MCF 10A (cell line): ENCODE measurements at regions of chr16 and their contacts with region 1.

Region 1: DNA sequence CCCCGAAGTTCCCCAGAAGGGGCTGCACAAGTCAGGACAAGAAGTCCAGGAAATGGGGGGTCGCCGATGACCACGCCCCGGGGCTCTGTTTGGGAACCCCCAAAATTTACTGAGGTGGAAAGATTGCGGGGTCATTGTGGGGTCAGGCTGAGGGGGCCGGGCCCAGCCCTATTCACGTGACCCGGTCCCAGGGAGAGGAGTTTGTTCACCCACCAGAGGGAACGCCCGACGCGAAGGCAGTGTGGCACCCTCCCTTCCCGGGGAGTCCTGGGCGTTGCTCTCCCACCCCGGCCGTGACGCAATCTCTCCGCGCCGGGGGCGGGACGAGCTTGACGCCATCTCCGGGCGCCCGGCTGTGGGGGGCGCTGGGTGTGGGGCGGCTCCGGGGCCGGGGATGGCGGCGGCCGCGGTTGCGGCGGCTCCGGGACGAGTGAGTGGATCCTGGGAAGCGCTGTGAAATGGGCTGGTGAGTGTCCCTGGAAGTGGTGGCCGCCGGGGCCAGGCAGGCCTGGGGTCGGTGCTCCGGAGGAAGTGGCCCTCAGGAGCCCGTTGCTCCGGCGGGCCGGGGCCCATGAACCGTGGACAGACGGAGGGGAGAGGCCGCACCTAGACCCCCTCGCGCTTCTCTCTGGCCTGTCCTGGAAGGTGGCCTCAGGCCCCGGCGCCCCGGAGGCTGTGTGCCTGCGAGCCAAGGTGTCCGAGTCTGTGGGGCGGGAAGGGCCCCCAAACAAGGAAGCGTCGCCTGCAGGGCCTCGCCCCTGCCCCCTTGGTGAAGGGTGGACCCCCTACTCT is at the start of gene ATXN1L:
- DNase-seq: peak; percentile 93
- H3K4me3 Mint-ChIP-seq: peak within 1 kb of the TSS; percentile 90
- H3K27ac Mint-ChIP-seq: peak within 1 kb of the TSS; percentile 98
- H3K4me1 Mint-ChIP-seq: peaks cover 22% of the 10 kb centered on the region
- H3K27me3 Mint-ChIP-seq: no peaks in the 10 kb centered on the region
- CTCF ChIP-seq: no peak
- total RNA-seq, gene ATXN1L: 18.2 and 20.4 TPM in 2 replicates

Region 2: DNA sequence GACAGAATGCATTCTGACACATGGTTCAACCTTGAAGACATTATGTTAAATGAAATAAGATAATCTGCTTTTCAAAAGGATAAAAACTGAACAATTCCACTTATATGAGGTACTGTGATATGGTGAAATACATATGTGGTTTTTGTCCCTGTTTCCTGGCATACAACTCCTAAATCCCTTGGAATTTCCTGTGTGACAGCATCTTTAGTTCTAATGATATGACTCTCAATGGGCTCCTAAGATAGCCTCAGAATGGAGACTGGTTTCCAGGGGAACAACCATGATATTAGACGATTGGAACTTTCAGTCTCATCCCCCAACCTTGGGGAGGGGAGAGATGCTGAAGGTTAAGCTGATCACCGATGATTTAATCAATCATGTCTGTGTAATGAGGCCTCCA is 83.6 kb before region 1 on chr16:
- CTCF ChIA-PET with region 1: no interaction called
- POLR2A ChIA-PET with region 1: no interaction called
- intact Hi-C with region 1: loop called (anchors 10 kb)
- DNase-seq: no peak
- H3K4me3 Mint-ChIP-seq: no peak overlapping the region
- H3K27ac Mint-ChIP-seq: no peak overlapping the region
- H3K4me1 Mint-ChIP-seq: no peaks in the 10 kb centered on the region
- H3K27me3 Mint-ChIP-seq: no peaks in the 10 kb centered on the region
- CTCF ChIP-seq: no peak

Region 3: GRCh38 chr16:71855937-71856662 is 10.3 kb after region 1 on chr16:
- CTCF ChIA-PET with region 1: interaction called, 3 read pairs
- POLR2A ChIA-PET with region 1: interaction called, 11 read pairs
- intact Hi-C with region 1: no loop called
- DNase-seq: no peak
- H3K4me3 Mint-ChIP-seq: no peak overlapping the region
- H3K27ac Mint-ChIP-seq: no peak overlapping the region
- H3K4me1 Mint-ChIP-seq: no peaks in the 10 kb centered on the region
- H3K27me3 Mint-ChIP-seq: no peaks in the 10 kb centered on the region
- CTCF ChIP-seq: no peak

Region 4: DNA sequence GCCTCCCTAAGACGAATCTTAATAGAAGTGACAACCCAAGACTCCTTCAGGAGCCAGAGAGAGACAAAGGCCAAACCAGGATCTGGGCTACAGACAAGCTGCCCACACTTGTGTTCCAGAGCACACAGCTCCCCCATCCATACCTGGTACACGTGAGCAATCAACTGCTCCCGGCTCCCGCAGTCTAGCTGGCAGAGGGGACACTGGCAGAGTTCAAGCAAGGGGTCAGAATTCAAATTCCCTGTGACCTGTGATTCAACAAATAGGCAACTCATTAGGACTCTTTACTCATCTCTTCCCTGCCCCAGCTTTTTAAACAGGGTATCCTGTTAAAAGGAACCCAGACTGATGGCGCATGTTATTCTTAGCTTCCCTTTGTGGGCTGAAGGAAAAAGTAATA is 18.2 kb after region 1 on chr16:
- CTCF ChIA-PET with region 1: interaction called, 3 read pairs
- POLR2A ChIA-PET with region 1: interaction called, 12 read pairs
- intact Hi-C with region 1: no loop called
- DNase-seq: no peak
- H3K4me3 Mint-ChIP-seq: no peak overlapping the region
- H3K27ac Mint-ChIP-seq: no peak overlapping the region
- H3K4me1 Mint-ChIP-seq: no peaks in the 10 kb centered on the region
- H3K27me3 Mint-ChIP-seq: no peaks in the 10 kb centered on the region
- CTCF ChIP-seq: no peak

Region 5: GRCh38 chr16:71883849-71884638 is 38.2 kb after region 1 on chr16 and contains the start of gene ZNF821:
- CTCF ChIA-PET with region 1: interaction called, 13 read pairs
- POLR2A ChIA-PET with region 1: interaction called, 36 read pairs
- intact Hi-C with region 1: no loop called
- DNase-seq: peak; percentile 56
- H3K4me3 Mint-ChIP-seq: peak within 1 kb of the TSS; percentile 86
- H3K27ac Mint-ChIP-seq: peak within 1 kb of the TSS; percentile 49
- H3K4me1 Mint-ChIP-seq: peaks cover 9% of the 10 kb centered on the region
- H3K27me3 Mint-ChIP-seq: no peaks in the 10 kb centered on the region
- CTCF ChIP-seq: peak; percentile 46
- total RNA-seq, gene ZNF821: 3.4 and 4.4 TPM in 2 replicates